ENCODE measurements at regions of chr17 and their contacts with region 1.

Region 1: DNA sequence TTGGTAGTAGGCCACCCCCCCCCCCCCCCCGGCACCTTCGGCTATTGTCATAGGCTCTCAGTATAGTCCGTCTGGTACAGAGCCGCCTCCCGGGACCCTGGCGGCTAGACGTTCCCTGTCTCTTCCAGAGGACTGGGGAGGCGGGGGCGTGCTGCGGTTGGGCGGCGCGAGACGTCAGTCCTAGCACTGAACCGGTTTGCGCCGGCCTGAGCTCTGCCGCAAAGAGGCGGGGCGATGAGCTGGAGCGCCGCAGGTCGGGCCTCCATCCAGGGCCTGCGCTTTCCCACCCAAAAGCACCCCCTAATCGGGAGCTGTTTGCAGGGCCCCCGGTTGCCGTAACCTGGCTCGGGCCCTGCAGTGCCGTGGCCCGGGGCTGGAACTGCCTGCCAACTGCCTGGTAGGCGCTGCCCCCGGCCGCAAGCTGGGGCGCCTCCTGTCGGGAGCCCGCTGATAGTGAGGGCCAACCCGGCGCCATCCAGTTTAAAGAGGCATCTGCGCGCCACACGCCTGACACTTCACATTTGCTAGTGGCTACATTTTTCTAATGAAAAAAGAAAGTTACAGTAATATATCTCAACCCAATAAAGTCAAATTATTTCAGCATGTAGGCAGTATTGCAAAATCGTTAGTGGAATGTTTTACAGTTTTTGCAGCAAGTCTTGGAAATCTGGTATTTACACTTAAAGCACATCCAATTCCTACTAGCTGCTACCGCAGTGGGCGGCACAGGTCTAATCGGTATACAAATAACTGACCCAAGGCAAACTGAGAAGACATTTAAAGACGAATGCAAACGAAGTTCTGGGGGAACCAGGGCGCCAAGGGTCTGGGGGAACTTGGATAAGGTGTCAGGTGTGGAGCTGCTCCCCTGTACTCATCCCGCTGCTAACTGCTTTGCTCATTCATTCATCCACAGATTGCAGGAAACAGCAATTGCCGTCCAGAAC is 748 bp upstream of the USP22 start:
- DNase-seq: peak; percentile 96 to 99 (median 99)
- H3K4me3 ChIP-seq: peak overlapping the region; percentile 43 to 99 (median 80)
- H3K27ac ChIP-seq: peak overlapping the region; percentile 96 to 100 (median 100)
- H3K27me3 ChIP-seq: no peaks in the 10 kb centered on the region
- CTCF ChIP-seq: peak; percentile 69 to 99 (median 92)

Region 2: DNA sequence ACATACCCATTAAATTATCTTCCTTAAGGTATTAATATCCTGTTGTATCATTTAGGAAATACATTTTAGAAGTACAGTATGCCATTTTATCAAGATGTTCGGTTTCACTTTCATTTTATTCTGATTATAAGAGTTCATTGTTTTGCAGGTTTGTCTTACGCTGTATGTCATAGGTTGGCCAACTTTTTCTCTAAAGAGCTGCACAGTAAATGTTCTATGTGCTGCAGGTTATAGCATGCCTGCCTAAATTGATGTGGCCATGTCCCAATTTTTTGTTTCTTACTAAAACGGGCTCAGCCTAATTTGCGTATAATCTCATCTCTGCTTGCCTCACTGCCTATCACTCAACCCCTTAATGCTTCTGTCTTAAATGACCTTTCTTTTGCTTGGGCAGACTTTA is 127.2 kb before region 1 on chr17:
- intact Hi-C with region 1: no loop called
- DNase-seq: no peak
- H3K4me3 ChIP-seq: no peak overlapping the region
- H3K27ac ChIP-seq: no peak overlapping the region
- H3K27me3 ChIP-seq: no peaks in the 10 kb centered on the region
- CTCF ChIP-seq: no peak

Region 3: DNA sequence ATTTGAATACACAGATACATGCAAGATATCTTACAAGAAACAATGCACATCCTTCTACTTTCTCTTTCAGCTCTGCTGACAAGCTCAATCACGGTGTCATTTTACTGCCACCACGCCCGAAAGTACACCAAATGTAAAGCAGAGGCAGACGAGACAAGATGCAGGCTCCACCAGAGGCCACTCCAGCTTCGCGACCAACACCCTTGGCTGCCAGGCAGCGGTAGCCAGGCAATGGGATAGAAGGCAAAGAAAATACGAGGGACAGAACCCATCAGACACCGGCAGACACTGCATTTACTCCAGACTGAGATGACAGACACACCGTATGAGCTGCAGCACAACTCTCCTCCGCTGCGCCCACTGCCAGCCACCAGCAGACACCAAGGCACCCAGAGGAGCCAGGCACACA is 41.7 kb before region 1 on chr17:
- intact Hi-C with region 1: loop called (anchors 5 kb)
- DNase-seq: peak in 3 of 10 donors; percentile 38 to 67 (median 42)
- H3K4me3 ChIP-seq: peak overlapping the region in 20 of 59 donors; percentile 3 to 39 (median 16)
- H3K27ac ChIP-seq: peak overlapping the region; percentile 29 to 99 (median 94)
- H3K27me3 ChIP-seq: no peaks in the 10 kb centered on the region
- CTCF ChIP-seq: peak in 9 of 56 donors; percentile 8 to 37 (median 14)

Region 4: GRCh38 chr17:21019976-21020586 is 23.5 kb before region 1 on chr17:
- intact Hi-C with region 1: loop called in 1 of 2 experiments (anchors 1 kb)
- DNase-seq: peak; percentile 74 to 83 (median 80)
- H3K4me3 ChIP-seq: peak overlapping the region in 2 of 59 donors; percentile 4 to 20
- H3K27ac ChIP-seq: peak overlapping the region in 49 of 59 donors; percentile 1 to 82 (median 54)
- H3K27me3 ChIP-seq: no peaks in the 10 kb centered on the region
- CTCF ChIP-seq: peak; percentile 27 to 76 (median 58)

Region 5: GRCh38 chr17:21089933-21090901 is 46.7 kb after region 1 on chr17:
- intact Hi-C with region 1: loop called in 1 of 2 experiments (anchors 5 kb)
- DNase-seq: no peak
- H3K4me3 ChIP-seq: no peak overlapping the region
- H3K27ac ChIP-seq: peak overlapping the region in 5 of 59 donors; percentile 2 to 40 (median 20)
- H3K27me3 ChIP-seq: no peaks in the 10 kb centered on the region
- CTCF ChIP-seq: no peak

Region 6: GRCh38 chr17:21100636-21101035 is 57.1 kb after region 1 on chr17:
- intact Hi-C with region 1: no loop called
- DNase-seq: no peak
- H3K4me3 ChIP-seq: no peak overlapping the region
- H3K27ac ChIP-seq: no peak overlapping the region
- H3K27me3 ChIP-seq: no peaks in the 10 kb centered on the region
- CTCF ChIP-seq: no peak

Region 7: DNA sequence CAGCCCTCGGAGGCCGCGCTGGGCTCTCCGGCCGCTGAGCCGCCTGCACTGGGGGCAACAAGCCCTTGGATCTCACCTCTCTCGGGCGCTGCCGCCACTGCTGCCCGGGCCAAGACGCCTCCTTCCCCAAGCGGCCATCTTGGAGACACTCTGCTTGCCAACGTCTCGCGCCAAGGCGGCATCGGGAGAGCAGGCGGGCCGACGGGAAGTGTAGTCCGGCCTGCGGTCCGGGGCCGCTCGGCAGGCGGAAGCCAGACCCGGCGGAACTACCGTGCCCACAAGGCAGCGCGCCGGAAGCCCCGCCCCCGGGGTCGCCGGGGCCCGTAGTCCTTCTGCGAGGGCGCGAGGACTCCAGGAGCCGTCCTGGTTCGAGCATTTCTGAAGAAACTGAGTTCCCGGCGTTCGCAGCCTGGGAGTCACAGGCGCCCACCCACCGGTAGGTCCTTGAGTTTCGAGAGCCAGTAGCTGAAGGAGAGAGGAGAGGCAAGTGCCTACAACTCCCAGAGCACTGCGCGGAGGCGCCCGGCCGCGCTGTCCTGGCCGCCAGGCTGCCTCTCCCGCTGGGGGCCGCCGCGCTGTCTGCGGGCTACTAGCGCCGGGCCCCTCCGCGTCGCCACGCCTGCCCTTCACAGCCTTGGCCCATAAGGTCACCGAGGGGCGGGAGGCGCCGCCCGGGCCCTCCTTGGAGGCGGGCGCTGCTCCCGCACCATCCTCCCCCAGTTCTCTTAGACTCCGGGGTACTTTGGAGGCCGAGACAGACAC is 170.6 kb after region 1 on chr17 and contains the start of gene TMEM11:
- intact Hi-C with region 1: loop called in 1 of 2 experiments (anchors 10 kb)
- DNase-seq: peak; percentile 87 to 98 (median 96)
- H3K4me3 ChIP-seq: peak within 1 kb of the TSS; percentile 72 to 100 (median 98)
- H3K27ac ChIP-seq: peak within 1 kb of the TSS; percentile 59 to 98 (median 92)
- H3K27me3 ChIP-seq: no peaks in the 10 kb centered on the region
- CTCF ChIP-seq: peak in 43 of 56 donors; percentile 1 to 64 (median 32)
- total RNA-seq, gene TMEM11: 11.9 to 23.7 (median 17.4) TPM

Region 8: DNA sequence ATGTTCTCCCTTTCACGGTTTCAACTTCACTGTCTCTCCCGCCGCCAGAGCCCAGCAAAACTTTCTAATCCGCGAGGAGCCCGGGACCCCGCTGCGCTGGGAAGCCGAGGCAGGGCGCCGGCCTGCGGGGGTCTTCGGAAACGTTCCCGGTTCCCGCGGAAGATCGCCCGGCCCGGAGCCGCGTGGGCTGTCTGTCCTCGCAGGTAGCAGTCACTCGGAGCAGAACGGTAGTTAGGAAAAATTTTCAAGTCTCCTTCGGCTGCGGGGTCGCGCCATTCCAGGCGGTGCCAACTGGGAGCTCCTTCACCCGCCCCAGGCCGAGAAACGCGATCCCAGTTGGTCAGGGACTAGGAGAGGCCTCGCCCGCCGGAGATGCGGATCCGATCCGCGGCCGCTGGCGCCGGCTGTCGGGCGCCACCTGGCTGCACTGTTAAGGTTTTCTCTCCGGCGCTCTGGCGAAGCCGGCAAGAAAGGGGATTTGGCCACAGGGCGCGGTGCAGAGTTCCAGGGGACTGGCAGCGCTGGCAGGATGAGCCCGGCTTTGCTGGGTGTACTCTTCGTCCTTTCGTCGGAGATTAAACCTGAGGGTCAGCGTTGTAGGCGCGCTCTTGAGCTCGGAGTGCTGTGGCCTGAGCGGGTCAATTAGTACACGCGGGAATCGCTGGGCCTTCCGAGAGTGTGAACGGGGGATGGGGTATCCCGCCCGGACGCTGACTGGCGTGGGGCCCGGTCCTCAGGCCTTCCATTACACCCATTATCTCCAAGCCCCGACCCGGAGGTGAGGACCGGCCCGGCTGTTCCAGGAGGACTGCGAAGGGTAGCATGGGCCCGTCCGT is 468.0 kb after region 1 on chr17:
- intact Hi-C with region 1: loop called in 1 of 2 experiments (anchors 10 kb)
- DNase-seq: peak; percentile 69 to 89 (median 82)
- H3K4me3 ChIP-seq: peak overlapping the region; percentile 36 to 88 (median 67)
- H3K27ac ChIP-seq: peak overlapping the region in 34 of 59 donors; percentile 15 to 86 (median 50)
- H3K27me3 ChIP-seq: no peaks in the 10 kb centered on the region
- CTCF ChIP-seq: peak; percentile 46 to 97 (median 85)